Activated CD4-positive, alpha-beta memory T cell treated with anti-CD3 and anti-CD28 coated beads for 36 hours (primary cell): ENCODE measurements at regions of chr1 and their contacts with region 1.

Region 1: GRCh38 chr1:169133801-169134502 is 27.5 kb downstream of the ATP1B1 start:
- DNase-seq: no peak
- H3K4me3 Mint-ChIP-seq: no peak overlapping the region
- H3K27ac Mint-ChIP-seq: no peak overlapping the region
- H3K4me1 Mint-ChIP-seq: peaks cover 5% of the 10 kb centered on the region
- H3K27me3 Mint-ChIP-seq: no peaks in the 10 kb centered on the region

Region 2: GRCh38 chr1:168603501-168604110 is 530.3 kb before region 1 on chr1:
- CTCF ChIA-PET with region 1: interaction called, 4 read pairs
- POLR2A ChIA-PET with region 1: no interaction called
- intact Hi-C with region 1: loop called (anchors 10 kb)
- DNase-seq: peak; percentile 77
- H3K4me3 Mint-ChIP-seq: no peak overlapping the region
- H3K27ac Mint-ChIP-seq: no peak overlapping the region
- H3K4me1 Mint-ChIP-seq: no peaks in the 10 kb centered on the region
- H3K27me3 Mint-ChIP-seq: peaks cover 7% of the 10 kb centered on the region

Region 3: GRCh38 chr1:168893359-168893801 is 240.6 kb before region 1 on chr1:
- CTCF ChIA-PET with region 1: no interaction called
- POLR2A ChIA-PET with region 1: no interaction called
- intact Hi-C with region 1: no loop called
- DNase-seq: no peak
- H3K4me3 Mint-ChIP-seq: no peak overlapping the region
- H3K27ac Mint-ChIP-seq: no peak overlapping the region
- H3K4me1 Mint-ChIP-seq: no peaks in the 10 kb centered on the region
- H3K27me3 Mint-ChIP-seq: peaks cover 25% of the 10 kb centered on the region

Region 4: GRCh38 chr1:169044296-169044695 is 89.7 kb before region 1 on chr1:
- CTCF ChIA-PET with region 1: no interaction called
- POLR2A ChIA-PET with region 1: no interaction called
- intact Hi-C with region 1: loop called (anchors 10 kb)
- DNase-seq: peak; percentile 57
- H3K4me3 Mint-ChIP-seq: no peak overlapping the region
- H3K27ac Mint-ChIP-seq: peak overlapping the region; percentile 35
- H3K4me1 Mint-ChIP-seq: peaks cover 53% of the 10 kb centered on the region
- H3K27me3 Mint-ChIP-seq: no peaks in the 10 kb centered on the region